GM12878 (cell line): ENCODE measurements at regions of chr14 and their contacts with region 1.

Region 1: DNA sequence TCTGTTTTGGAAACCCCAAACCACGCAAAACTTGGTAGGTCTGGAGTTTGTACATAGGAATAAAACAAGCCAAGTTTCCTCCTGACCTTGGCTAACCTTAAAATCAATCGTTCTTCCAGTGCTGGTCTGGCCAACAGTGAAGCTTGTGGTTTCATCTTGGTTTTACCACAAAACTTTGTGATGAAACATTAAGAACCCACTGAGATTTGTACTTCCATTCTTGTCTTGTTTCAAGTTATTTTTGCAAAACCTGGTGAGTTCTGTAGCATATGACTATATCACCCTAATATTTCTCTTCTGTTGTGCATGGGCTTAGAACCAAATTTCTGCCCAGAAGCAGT is 26.4 kb downstream of the SIX1 start:
- DNase-seq: no peak
- ATAC-seq: no peak
- H3K4me3 ChIP-seq: no peak overlapping the region
- H3K27ac ChIP-seq: no peak overlapping the region
- H3K4me1 ChIP-seq: no peaks in the 10 kb centered on the region
- H3K27me3 ChIP-seq: no peaks in the 10 kb centered on the region
- CTCF ChIP-seq: no peak
- EP300 ChIP-seq: no peak
- POLR2A ChIP-seq: no peak
- RAD21 ChIP-seq: no peak

Region 2: DNA sequence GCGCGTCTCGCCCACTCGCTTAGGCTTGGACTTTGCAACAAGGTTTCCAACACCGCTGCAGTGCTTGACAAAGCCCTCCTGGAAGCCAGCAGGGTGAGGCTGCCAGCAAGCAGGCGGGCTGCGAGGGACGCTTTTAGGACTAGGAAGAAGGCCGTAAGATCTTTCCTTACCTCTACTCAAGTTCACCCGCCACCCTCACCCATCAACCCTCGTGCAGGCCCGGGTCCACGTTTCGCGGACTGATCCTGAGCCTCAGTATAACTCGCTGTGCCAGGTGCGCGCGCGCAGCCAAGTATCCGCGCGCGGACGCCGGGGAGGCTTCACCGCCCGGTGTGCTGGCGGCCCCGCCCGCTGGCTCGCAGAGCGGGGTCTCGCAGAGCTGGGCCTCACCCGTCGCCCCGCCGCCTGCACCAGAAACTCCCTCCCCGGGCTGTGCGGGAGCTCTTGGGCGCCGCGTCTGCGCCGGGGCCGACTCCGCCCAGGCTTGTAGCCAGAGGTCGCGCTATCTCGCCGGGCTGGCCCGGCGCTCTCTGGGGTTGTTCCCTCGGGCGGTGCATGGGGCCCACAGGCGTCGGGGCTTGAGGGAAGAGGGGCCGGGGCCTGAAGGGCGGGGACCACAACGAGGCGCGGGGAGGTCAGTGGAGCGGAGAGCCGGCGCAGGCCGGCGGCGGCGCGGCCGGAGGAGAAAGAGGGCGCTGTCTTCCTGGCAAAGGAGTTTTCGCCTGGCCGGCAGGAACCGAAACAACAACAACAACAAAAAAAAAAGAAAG is 34.0 kb after region 1 on chr14:
- CTCF ChIA-PET with region 1: interaction called, 3 read pairs
- POLR2A ChIA-PET with region 1: no interaction called
- RAD21 ChIA-PET with region 1: interaction called, 3 read pairs
- SMC1A ChIA-PET with region 1: interaction called, 11 read pairs
- in situ Hi-C with region 1: no loop called
- intact Hi-C with region 1: no loop called
- DNase-seq: peak; percentile 31
- ATAC-seq: peak; percentile 94
- H3K4me3 ChIP-seq: peak overlapping the region; percentile 85
- H3K27ac ChIP-seq: no peak overlapping the region
- H3K4me1 ChIP-seq: peaks cover 9% of the 10 kb centered on the region
- H3K27me3 ChIP-seq: peaks cover 10 to 25% of the 10 kb centered on the region in 2 experiments
- CTCF ChIP-seq: peak; percentile 51 to 75 (median 58); a peak in 5 of 6 replicates
- EP300 ChIP-seq: no peak
- POLR2A ChIP-seq: no peak
- RAD21 ChIP-seq: peak; percentile 57